CD14-positive monocyte (primary cell): ENCODE measurements at regions of chr15 and their contacts with region 1.

Region 1: DNA sequence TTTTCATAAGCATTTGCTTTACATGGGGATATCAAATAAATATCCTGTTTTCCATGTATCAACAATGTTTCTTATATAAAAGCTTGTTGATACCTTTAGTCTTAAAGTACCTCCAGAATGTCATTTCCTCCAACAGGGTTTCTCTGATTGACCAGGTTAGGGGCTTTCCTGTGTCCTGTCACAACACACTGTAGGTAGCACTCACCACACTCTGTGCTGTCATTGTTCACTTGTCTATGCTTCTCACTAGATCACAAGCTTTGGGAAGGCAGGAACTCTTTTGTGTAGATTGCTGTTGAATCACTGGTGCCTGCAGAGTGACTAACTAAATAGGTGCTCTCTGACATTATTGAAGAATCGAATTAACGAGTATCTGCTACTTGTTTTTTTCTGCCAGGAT is 49.8 kb downstream of the USP50 start:
- DNase-seq: no peak
- H3K4me3 ChIP-seq: no peak overlapping the region
- H3K4me3 Mint-ChIP-seq: no peak overlapping the region
- H3K27ac ChIP-seq: no peak overlapping the region
- H3K27ac Mint-ChIP-seq: no peak overlapping the region
- H3K4me1 ChIP-seq: no peaks in the 10 kb centered on the region
- H3K4me1 Mint-ChIP-seq: no peaks in the 10 kb centered on the region
- H3K27me3 ChIP-seq: no peaks in the 10 kb centered on the region
- H3K27me3 Mint-ChIP-seq: no peaks in the 10 kb centered on the region
- CTCF ChIP-seq: no peak

Region 2: GRCh38 chr15:50968353-50968752 is 471.7 kb after region 1 on chr15:
- intact Hi-C with region 1: no loop called
- DNase-seq: no peak
- H3K4me3 ChIP-seq: no peak overlapping the region
- H3K4me3 Mint-ChIP-seq: no peak overlapping the region
- H3K27ac ChIP-seq: no peak overlapping the region
- H3K27ac Mint-ChIP-seq: no peak overlapping the region
- H3K4me1 ChIP-seq: no peaks in the 10 kb centered on the region
- H3K4me1 Mint-ChIP-seq: no peaks in the 10 kb centered on the region
- H3K27me3 ChIP-seq: no peaks in the 10 kb centered on the region
- H3K27me3 Mint-ChIP-seq: no peaks in the 10 kb centered on the region
- CTCF ChIP-seq: no peak

Region 3: DNA sequence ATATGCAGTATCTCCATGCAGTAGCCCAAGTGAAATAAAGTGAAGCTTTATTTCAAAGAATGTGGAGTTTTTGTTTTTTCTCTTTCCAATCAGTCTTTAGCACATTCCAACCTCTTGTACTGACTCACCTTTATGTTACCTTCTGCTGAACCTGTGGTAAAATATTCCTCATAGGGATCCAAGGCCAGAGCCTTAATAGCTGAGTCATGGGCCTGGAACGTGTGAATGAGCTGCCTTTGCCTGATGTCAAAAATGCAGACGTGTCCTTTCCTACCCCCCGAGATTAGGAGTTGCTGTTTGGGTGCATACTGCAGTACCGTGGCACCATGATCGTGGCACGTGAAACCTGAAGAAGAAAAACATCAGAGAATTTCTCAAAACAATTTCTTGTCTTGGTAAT is 953.3 kb after region 1 on chr15:
- intact Hi-C with region 1: loop called in 1 of 2 experiments (anchors 10 kb)
- DNase-seq: no peak
- H3K4me3 ChIP-seq: no peak overlapping the region
- H3K4me3 Mint-ChIP-seq: no peak overlapping the region
- H3K27ac ChIP-seq: no peak overlapping the region
- H3K27ac Mint-ChIP-seq: peak overlapping the region in 1 of 7 donors; percentile 58
- H3K4me1 ChIP-seq: no peaks in the 10 kb centered on the region
- H3K4me1 Mint-ChIP-seq: no peaks in the 10 kb centered on the region
- H3K27me3 ChIP-seq: no peaks in the 10 kb centered on the region
- H3K27me3 Mint-ChIP-seq: no peaks in the 10 kb centered on the region
- CTCF ChIP-seq: no peak

Region 4: GRCh38 chr15:51475736-51476135 is 979.0 kb after region 1 on chr15:
- intact Hi-C with region 1: loop called in 1 of 2 experiments (anchors 10 kb)
- DNase-seq: no peak
- H3K4me3 ChIP-seq: no peak overlapping the region
- H3K4me3 Mint-ChIP-seq: no peak overlapping the region
- H3K27ac ChIP-seq: no peak overlapping the region
- H3K27ac Mint-ChIP-seq: no peak overlapping the region
- H3K4me1 ChIP-seq: no peaks in the 10 kb centered on the region
- H3K4me1 Mint-ChIP-seq: no peaks in the 10 kb centered on the region
- H3K27me3 ChIP-seq: no peaks in the 10 kb centered on the region
- H3K27me3 Mint-ChIP-seq: no peaks in the 10 kb centered on the region
- CTCF ChIP-seq: no peak